HEK293T (cell line): ENCODE measurements at regions of chr3 and their contacts with region 1.

Region 1: DNA sequence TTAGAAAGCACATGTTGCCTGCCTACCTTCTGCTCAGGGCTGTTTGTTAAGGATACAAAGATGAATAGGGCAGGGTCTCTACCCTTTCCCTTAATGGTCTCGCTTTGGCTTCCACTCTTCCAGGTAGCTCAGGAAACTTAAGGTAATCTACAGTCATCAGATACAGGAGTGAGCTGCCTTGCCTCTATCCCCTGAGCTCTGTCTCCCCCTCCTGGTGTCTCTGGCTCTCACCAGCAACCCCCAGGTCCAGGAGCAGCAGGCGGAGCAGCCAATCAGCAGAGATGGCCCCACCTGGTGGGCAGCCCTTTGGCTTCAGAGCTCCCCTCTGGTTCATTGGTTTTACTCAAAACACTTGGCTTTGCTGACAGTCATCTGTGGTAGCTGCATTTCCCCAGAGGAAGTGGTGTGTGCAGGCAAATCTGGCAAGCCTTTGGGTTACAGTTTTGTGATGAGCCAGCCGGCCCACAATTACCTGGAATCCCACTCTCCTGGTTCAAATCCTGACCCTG is 8.5 kb upstream of the CX3CR1 start:
- DNase-seq: peak; percentile 89

Region 2: DNA sequence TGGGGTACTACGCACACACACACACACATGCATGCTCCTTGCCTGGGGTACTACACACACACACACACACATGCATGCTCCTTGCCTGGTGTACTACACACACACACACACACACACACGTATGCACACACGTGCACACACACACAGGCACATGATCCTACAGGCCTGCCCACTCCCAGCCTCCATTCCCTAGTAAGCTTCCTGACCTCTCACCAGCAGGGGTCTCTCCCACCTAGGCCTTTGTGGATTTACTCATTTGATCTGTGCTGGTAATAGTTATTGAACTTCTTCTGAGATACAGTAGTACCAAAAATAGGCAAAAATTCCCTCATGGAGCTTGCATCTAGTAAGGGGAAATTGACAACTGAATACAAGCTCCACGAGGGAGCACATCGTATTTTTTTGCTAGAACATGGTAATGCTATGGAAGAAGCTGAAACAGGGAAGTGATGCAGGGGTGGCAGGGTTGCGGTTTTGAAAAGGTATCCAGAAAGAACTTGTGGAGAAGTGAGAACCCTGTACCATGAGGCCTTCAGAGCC is 161.8 kb before region 1 on chr3:
- CTCF ChIA-PET with region 1: interaction called, 39 read pairs
- POLR2A ChIA-PET with region 1: interaction called, 4 read pairs
- DNase-seq: no peak

Region 3: GRCh38 chr3:39132140-39133097 is 155.9 kb before region 1 on chr3:
- CTCF ChIA-PET with region 1: interaction called, 39 read pairs
- POLR2A ChIA-PET with region 1: interaction called, 4 read pairs
- DNase-seq: no peak

Region 4: DNA sequence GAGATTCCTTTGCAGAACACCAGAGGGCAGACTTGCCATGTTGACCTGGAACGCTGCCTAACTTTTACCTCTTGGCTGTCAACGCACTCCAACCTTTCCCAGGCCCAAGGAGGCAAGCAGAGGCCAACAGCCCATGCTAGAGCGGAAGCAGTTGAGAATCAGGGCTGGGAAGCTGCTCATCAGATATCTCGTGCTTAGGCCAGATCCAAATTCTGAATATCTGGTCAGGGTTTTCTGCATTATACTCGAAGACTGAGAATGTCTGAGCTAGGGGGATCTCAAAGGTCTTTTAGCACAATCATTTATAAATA is 98.4 kb before region 1 on chr3:
- CTCF ChIA-PET with region 1: interaction called, 87 read pairs
- POLR2A ChIA-PET with region 1: interaction called, 5 read pairs
- DNase-seq: peak; percentile 83

Region 5: DNA sequence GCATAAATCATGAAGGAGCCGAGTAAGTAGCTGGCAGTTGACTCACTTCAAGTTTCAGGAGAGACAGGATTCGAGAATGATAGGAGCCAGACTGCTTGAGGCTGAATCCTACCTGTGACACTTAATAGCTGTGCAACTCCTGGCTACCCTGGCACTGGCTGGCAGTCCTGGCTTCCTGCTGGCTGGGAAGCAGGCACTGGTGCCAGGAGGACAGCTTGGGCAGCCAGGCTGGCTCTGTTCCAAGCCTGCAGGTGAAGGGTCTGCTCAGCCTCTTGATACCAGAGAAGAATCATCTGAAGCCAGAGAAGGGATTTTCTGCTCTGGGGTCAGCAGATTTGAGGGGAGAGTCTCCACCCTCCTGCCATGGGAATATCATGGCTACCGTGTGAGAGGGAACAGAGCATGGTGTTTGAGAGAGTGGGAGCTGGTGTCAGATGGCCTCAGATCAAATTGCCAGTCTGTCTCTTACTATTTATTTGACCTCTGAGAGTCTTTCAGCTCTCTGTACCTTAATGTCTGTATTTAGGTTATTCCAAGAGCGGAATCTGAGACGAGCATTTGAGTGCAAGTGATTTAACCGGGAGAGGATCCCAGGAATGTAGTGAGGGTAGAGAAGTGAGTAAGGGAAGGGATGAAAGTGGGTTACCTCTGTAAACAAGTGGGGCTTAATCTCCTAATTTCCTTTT is 91.5 kb before region 1 on chr3:
- CTCF ChIA-PET with region 1: interaction called, 87 read pairs
- POLR2A ChIA-PET with region 1: interaction called, 3 read pairs
- DNase-seq: no peak

Region 6: GRCh38 chr3:39273119-39273518 is 15.2 kb before region 1 on chr3:
- CTCF ChIA-PET with region 1: interaction called, 10 read pairs
- POLR2A ChIA-PET with region 1: no interaction called
- DNase-seq: peak; percentile 37